ENCODE measurements at regions of chr9 and their contacts with region 1.

Region 1: DNA sequence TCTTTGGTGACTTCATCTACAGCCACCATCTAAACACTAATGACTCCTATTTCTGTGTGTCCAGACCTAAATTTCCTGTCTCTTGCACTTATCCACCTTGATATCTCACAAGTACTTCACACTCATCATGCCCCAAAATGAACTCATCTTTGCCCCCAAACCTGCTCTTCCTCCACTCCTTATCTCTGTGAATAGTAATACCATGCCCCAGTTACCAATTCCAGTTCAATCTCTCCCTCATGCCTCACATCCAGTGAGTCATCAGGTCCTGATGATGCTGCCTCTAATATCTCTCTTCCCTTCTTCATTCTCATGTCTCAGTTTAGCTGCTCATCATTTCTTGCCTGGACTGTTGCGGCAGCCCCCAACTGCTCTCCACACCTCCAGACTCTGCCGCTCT is 14.9 kb upstream of the DNAJB5 start:
- DNase-seq: no peak
- H3K4me3 ChIP-seq: no peak overlapping the region
- H3K27ac ChIP-seq: no peak overlapping the region
- H3K4me1 ChIP-seq: no peaks in the 10 kb centered on the region
- H3K27me3 ChIP-seq: peaks cover 29% of the 10 kb centered on the region
- CTCF ChIP-seq: no peak

Region 2: GRCh38 chr9:34430843-34431437 is 543.7 kb before region 1 on chr9:
- intact Hi-C with region 1: no loop called
- DNase-seq: peak; percentile 83
- H3K4me3 ChIP-seq: no peak overlapping the region
- H3K27ac ChIP-seq: peak overlapping the region; percentile 24
- H3K4me1 ChIP-seq: peaks cover 44% of the 10 kb centered on the region
- H3K27me3 ChIP-seq: no peaks in the 10 kb centered on the region
- CTCF ChIP-seq: no peak

Region 3: DNA sequence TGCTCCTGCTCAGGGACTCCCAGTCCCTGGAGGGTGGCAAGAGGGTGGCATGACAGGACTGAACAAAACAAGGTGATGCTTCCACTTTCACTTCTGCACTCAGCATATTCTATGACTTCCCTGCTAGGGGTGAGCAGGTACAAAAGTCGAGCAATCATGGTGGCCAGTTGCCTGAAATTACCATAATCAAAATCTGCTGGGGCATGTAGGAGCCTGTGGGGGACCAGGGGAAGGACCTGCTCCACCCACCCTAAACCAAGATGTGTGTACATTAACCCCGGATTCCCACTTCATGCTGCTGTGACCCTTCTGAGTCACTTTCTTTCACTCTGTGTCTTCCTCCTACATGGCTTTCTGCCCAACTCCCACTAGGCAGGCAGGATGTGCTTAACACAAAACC is 89.9 kb before region 1 on chr9:
- intact Hi-C with region 1: no loop called
- DNase-seq: no peak
- H3K4me3 ChIP-seq: no peak overlapping the region
- H3K27ac ChIP-seq: no peak overlapping the region
- H3K4me1 ChIP-seq: no peaks in the 10 kb centered on the region
- H3K27me3 ChIP-seq: peaks cover 9% of the 10 kb centered on the region
- CTCF ChIP-seq: no peak

Region 4: GRCh38 chr9:35035851-35036701 is 61.4 kb after region 1 on chr9:
- intact Hi-C with region 1: loop called (anchors 10 kb)
- DNase-seq: peak; percentile 71
- H3K4me3 ChIP-seq: peak overlapping the region; percentile 57
- H3K27ac ChIP-seq: peak overlapping the region; percentile 56
- H3K4me1 ChIP-seq: peaks cover 9% of the 10 kb centered on the region
- H3K27me3 ChIP-seq: no peaks in the 10 kb centered on the region
- CTCF ChIP-seq: no peak